Endothelial cell of umbilical vein (primary cell): ENCODE measurements at regions of chr3 and their contacts with region 1.

Region 1: DNA sequence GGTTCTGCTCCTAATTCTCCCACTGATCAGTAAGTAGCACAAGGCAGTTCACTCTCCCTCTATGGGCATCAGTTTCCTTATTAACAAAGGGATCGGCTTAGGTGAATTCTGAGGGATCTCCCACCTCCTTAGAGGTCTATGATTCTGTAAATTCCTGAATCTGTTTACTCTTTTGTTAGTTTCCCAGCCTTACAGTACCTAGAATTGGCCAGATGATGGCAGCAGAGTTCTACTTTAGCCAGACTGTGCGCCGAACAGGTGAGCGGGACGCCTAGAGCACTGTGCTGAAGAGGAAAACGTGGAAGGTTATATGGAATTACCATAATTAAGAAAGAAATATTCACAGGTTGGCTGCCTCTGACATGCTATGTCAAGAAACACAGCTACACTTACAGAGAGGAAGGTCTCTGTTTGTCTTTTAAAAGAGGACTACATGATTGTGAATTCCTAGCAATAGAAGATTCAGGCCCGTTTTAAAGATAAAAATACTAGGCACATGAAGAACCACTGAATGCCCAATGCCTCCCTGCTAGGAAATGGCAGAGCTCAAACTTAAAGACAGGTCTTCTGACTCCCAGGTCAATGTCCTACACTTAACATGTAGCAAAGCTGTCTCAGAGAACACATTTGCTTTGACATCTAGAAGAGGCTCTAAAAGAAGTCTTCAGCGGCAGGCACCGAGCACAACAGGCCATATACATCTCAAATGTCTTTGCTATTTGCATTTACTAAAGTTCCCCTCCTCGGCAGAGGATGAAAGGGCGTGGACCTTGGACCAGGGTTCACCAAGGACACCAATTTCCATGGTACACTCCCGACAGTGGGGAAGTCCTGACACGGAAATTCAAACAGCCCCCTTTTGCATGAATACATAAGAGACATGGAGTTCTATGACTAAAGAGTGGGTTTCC is 259.9 kb downstream of the FGF12 start:
- DNase-seq: peak; percentile 61
- H3K4me3 ChIP-seq: no peak overlapping the region
- H3K27ac ChIP-seq: no peak overlapping the region
- H3K4me1 ChIP-seq: no peaks in the 10 kb centered on the region
- H3K27me3 ChIP-seq: peaks cover 9 to 17% of the 10 kb centered on the region in 2 experiments
- CTCF ChIP-seq: peak; percentile 77
- POLR2A ChIP-seq: no peak

Region 2: DNA sequence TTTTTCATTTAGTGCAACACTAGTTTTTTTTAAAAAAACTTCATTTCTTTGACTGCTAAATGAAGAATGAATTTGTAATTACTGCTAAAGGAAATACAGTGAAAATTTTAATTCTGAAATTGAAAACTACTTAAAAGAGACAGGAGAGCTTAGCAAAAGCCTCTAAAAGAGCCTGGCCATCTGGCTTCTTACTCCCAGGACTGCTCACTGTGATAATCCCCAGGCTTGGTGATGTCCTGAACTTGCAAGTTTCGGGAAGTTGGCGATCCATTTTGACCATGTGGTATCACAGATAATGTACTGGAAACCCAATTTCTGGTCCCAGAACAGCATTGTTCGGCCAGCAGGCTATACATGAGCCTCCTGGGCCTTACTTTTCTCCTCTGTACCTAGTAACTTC is 32.2 kb before region 1 on chr3:
- CTCF ChIA-PET with region 1: no interaction called
- POLR2A ChIA-PET with region 1: no interaction called
- dilution Hi-C with region 1: no loop called
- intact Hi-C with region 1: no loop called
- DNase-seq: no peak
- H3K4me3 ChIP-seq: no peak overlapping the region
- H3K27ac ChIP-seq: no peak overlapping the region
- H3K4me1 ChIP-seq: no peaks in the 10 kb centered on the region
- H3K27me3 ChIP-seq: peaks cover 3 to 9% of the 10 kb centered on the region in 2 experiments
- CTCF ChIP-seq: no peak
- POLR2A ChIP-seq: no peak

Region 3: DNA sequence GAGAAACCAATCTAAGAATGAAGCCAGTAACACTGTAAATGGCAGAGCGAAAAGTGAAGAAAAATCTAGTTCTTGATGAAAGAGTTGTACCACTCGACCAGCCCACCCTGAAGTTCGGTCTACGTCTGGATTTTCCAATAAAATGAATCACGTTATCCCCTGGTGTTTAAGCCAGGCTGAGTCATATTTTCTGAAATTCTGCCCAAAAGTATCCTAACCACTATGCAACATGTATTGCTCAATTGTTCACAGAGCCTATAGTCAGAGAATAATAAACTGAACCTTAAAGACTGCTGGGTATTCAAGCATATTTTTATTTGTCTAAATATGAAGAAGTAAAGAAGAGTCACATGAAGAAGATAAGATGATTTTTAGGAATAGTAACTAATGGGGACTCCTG is 14.2 kb after region 1 on chr3:
- CTCF ChIA-PET with region 1: interaction called, 10 read pairs
- POLR2A ChIA-PET with region 1: no interaction called
- dilution Hi-C with region 1: no loop called
- intact Hi-C with region 1: no loop called
- DNase-seq: peak; percentile 47
- H3K4me3 ChIP-seq: no peak overlapping the region
- H3K27ac ChIP-seq: no peak overlapping the region
- H3K4me1 ChIP-seq: peaks cover 13% of the 10 kb centered on the region
- H3K27me3 ChIP-seq: peaks cover 0 to 6% of the 10 kb centered on the region in 2 experiments
- CTCF ChIP-seq: no peak
- POLR2A ChIP-seq: no peak

Region 4: GRCh38 chr3:192802957-192803899 is 335.7 kb after region 1 on chr3:
- CTCF ChIA-PET with region 1: interaction called, 89 read pairs
- POLR2A ChIA-PET with region 1: no interaction called
- dilution Hi-C with region 1: no loop called
- intact Hi-C with region 1: loop called (anchors 1 kb)
- DNase-seq: peak; percentile 49
- H3K4me3 ChIP-seq: no peak overlapping the region
- H3K27ac ChIP-seq: no peak overlapping the region
- H3K4me1 ChIP-seq: no peaks in the 10 kb centered on the region
- H3K27me3 ChIP-seq: no peaks in the 10 kb centered on the region
- CTCF ChIP-seq: peak; percentile 29 to 51
- POLR2A ChIP-seq: no peak

Region 5: DNA sequence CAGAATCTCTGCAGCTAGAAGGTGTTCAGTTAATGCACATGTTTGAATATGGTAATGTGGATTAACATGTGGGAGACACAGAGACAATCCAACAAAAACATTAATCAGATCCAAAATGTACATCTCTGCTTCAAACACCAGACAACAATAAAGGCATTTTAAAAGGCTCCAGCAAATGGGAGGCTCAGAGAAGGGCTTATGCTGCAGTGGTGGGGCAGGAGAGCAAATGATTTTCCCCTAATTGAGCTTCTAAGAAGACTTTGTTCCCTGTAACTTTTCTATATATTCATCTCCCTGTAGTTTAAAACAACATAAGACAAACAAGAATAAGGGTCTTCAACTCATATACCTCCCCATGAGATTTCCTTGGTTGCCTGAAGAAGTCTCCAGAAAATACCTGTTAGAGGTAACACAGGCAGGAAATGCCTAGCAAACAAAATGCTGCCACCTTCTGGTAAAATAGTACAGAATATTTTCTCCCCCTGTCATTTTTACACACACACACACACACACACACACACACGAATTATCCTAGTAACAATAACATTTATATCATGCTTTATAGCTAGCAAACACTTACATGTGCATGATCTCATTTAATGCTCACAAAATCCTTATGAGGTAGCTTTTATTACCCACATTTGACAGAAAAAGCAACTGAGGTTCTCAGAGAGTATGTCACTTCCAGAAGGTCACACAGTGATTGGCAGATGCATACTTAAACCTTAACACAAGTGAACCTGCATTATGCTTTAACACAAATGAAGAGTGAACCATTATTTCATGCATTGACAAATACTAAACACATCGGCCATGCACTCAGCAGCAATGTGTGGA is 573.6 kb after region 1 on chr3:
- CTCF ChIA-PET with region 1: interaction called, 3 read pairs
- POLR2A ChIA-PET with region 1: no interaction called
- dilution Hi-C with region 1: no loop called
- intact Hi-C with region 1: loop called (anchors 10 kb)
- DNase-seq: peak; percentile 43
- H3K4me3 ChIP-seq: no peak overlapping the region
- H3K27ac ChIP-seq: no peak overlapping the region
- H3K4me1 ChIP-seq: no peaks in the 10 kb centered on the region
- H3K27me3 ChIP-seq: no peaks in the 10 kb centered on the region
- CTCF ChIP-seq: peak; percentile 15
- POLR2A ChIP-seq: no peak